ENCODE measurements at regions of chr12 and their contacts with region 1.

Region 1: DNA sequence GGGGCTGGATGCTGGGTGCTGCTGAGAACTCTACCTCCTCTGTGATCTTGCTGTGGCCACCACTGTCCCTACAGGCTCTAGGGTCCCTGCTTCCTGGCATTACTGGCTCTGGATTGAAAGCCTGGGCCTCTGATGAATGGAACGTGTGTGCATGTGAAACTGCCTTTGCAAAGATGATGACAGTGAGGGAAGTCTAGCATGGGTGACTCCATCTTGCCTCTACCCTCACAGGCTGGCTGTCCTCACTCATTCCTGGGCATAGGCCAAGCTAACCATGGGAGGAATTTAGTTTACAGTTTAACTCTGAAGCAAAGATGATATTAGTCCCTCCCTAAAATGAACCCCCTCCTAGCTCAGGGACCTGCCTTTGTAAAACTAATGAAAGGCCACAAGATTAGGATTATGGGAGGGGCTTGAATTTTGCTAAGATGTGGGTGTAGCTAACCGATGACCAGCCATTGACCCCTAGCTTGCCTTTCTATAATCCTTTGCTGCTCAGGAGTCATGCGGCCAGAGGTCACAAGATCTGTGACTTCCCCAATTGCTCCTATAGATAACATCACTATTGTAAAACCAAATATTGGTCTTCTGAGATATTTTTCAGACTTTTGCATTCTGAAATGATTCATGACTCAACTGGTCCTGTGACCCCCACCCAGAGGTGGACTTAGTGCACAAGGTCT is 2.2 kb upstream of the C1S start:
- DNase-seq: no peak
- ATAC-seq: no peak

Region 2: DNA sequence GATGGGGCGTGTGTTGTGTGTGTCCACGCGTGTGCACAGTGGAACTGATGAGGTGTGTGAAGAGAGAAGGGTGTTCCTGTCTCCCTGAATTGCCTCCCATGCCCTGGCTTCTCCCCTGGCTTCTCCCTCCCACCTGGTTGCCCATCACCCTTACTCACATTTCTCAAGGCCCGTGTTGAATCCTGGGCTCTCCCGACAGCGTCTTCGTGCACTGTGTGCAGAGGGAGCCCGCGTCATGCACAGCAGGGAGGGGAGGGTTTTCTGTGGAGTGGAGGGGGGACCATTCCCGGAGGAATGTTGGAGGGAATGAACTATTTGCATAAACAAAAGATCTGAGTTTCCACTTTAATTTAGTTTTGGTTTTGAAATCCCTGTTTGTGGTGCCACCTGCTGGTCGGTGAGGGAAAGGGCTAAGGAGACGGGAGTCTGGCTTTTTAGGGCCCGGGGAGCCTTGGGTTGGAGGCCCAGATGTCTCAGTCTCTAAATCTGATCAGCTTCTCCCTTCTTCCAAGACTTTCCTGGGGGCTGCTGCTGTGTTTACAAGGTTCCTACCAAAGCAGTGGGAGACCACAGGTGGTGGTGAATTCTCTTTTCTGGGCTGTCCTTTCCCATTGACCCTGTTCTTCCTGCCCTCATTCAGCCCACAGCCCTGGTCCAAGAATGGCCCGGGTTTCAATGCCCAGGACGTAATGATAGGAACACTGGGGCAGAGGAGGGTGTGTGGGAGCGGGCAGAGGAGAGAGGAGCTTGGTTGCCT is 34.1 kb after region 1 on chr12 and contains the start of gene C1R:
- intact Hi-C with region 1: loop called (anchors 5 kb)
- DNase-seq: peak; percentile 83
- ATAC-seq: peak; percentile 83
- total RNA-seq, gene C1R: 165 TPM

Region 3: GRCh38 chr12:7108796-7109571 is 50.7 kb after region 1 on chr12 and contains the start of gene C1RL:
- intact Hi-C with region 1: no loop called
- DNase-seq: peak; percentile 95
- ATAC-seq: peak; percentile 86
- total RNA-seq, gene C1RL: 10.7 TPM

Region 4: DNA sequence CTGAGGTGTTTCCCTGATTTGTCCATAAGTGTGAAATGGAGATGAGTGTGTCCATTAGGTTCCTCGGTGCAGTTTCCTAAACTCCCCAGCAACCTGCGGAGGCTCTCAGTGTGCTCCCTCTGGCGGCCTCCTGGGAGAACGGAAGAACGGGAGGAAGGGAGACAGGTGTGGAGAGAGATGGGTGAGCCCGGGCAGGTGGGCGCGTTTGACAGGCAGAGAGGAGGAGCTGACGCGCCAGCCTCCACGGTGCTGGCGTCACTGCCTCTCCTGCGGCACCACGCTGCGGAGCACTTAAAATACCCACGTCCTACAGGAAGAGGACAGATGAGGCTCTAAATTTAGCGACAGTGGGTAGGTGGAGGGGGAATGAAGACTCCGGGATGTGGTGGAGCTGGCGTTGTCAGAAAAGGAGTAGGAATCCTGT is 104.4 kb after region 1 on chr12:
- intact Hi-C with region 1: no loop called
- DNase-seq: no peak
- ATAC-seq: peak; percentile 65